ENCODE measurements at regions of chr5 and their contacts with region 1.

Region 1: DNA sequence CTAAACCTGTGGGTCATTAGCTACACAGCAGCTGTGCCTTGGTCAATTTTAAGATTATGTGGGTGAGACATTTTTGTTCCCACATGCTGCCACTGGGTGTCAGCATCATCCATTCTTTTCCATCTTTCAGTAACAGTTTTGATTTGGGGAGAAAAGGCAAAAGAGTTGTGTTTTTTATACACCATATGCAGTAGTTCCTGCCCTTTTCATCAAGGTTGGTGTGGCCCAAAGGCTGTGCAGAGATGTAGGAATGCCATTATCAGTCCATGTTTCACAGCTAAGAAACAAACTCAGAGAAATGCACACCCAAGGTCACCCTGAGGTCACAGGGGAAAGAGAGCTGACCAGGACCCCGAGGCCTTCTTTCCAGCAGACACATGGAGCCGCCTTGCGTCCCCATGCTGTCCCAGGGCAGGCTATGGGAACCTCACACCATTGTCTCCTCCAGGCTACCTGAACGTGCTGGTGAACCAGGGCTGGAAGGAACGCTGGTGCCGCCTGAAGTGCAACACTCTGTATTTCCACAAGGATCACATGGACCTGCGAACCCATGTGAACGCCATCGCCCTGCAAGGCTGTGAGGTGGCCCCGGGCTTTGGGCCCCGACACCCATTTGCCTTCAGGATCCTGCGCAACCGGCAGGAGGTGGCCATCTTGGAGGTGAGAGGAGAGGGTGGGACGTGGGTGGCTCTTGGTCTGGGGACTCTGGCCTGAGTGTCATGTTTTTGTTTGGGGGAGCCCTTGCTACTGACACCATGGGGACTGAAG is 27.8 kb upstream of the GRPEL2 start:
- DNase-seq: peak in 1 of 2 donors; percentile 79
- ATAC-seq: peak in 2 of 3 donors; percentile 55 to 67
- H3K4me3 ChIP-seq: no peak overlapping the region
- H3K4me3 Mint-ChIP-seq: no peak overlapping the region
- H3K27ac ChIP-seq: no peak overlapping the region
- H3K27ac Mint-ChIP-seq: no peak overlapping the region
- H3K4me1 ChIP-seq: no peaks in the 10 kb centered on the region
- H3K4me1 Mint-ChIP-seq: no peaks in the 10 kb centered on the region
- H3K27me3 ChIP-seq: no peaks in the 10 kb centered on the region
- H3K27me3 Mint-ChIP-seq: peaks cover 0 to 2% of the 10 kb centered on the region in 2 donors
- CTCF ChIP-seq: peak; percentile 65

Region 2: GRCh38 chr5:149371296-149371962 is 54.0 kb after region 1 on chr5:
- intact Hi-C with region 1: loop called (anchors 1 kb)
- DNase-seq: peak; percentile 53 to 86
- ATAC-seq: peak; percentile 85 to 96 (median 93)
- H3K4me3 ChIP-seq: no peak overlapping the region
- H3K4me3 Mint-ChIP-seq: no peak overlapping the region
- H3K27ac ChIP-seq: no peak overlapping the region
- H3K27ac Mint-ChIP-seq: no peak overlapping the region
- H3K4me1 ChIP-seq: peaks cover 2% of the 10 kb centered on the region
- H3K4me1 Mint-ChIP-seq: no peaks in the 10 kb centered on the region
- H3K27me3 ChIP-seq: no peaks in the 10 kb centered on the region
- H3K27me3 Mint-ChIP-seq: no peaks in the 10 kb centered on the region
- CTCF ChIP-seq: peak; percentile 78

Region 3: GRCh38 chr5:149392718-149393117 is 75.3 kb after region 1 on chr5:
- intact Hi-C with region 1: no loop called
- DNase-seq: no peak
- ATAC-seq: no peak
- H3K4me3 ChIP-seq: no peak overlapping the region
- H3K4me3 Mint-ChIP-seq: no peak overlapping the region
- H3K27ac ChIP-seq: no peak overlapping the region
- H3K27ac Mint-ChIP-seq: no peak overlapping the region
- H3K4me1 ChIP-seq: no peaks in the 10 kb centered on the region
- H3K4me1 Mint-ChIP-seq: no peaks in the 10 kb centered on the region
- H3K27me3 ChIP-seq: no peaks in the 10 kb centered on the region
- H3K27me3 Mint-ChIP-seq: peaks cover 6 to 7% of the 10 kb centered on the region in 2 donors
- CTCF ChIP-seq: no peak

Region 4: DNA sequence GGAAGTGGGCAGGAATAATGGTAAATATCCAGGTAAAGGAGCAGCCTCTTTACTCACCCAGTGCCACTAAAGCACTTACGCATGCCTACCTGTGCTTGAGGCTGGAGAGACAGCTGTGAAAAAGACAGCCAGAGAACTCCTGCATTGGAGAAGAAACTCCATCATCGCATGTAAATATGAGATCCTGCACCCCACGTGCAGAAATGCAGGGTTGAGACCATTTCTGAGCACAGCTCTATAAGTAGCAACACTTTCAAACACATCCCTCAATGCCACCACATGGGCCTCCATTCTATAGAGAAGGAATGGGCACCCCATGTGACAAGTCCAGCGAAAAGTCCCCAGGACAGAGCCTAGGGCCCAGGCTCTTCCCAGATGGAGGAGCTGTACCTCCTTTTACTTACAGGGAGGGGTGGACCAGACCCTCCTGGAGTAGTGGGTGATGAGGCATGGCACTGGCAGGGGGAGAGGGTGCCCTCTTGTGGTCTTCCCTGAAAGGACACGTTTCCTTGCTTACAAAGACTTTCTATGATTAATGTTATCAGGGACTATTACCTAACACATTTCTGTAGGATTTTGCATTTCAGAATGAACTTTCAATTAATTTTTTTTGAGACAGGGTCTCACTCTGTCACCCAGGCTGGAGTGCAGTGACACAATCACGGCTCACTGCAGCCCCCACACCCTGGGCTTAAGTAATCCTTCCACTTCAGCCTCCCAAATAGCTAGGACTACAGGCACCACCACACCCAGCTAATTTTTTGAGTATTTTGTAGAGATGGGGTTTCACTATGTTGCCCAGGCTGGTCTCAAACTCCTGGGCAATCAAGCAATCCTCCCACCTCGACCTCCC is 116.9 kb after region 1 on chr5:
- intact Hi-C with region 1: loop called (anchors 2 kb)
- DNase-seq: peak; percentile 31 to 70
- ATAC-seq: peak; percentile 53 to 63 (median 55)
- H3K4me3 ChIP-seq: no peak overlapping the region
- H3K4me3 Mint-ChIP-seq: no peak overlapping the region
- H3K27ac ChIP-seq: no peak overlapping the region
- H3K27ac Mint-ChIP-seq: peak overlapping the region in 1 of 2 donors; percentile 40
- H3K4me1 ChIP-seq: peaks cover 10% of the 10 kb centered on the region
- H3K4me1 Mint-ChIP-seq: peaks cover 16 to 17% of the 10 kb centered on the region in 2 donors
- H3K27me3 ChIP-seq: peaks cover 3% of the 10 kb centered on the region
- H3K27me3 Mint-ChIP-seq: peaks cover 9 to 10% of the 10 kb centered on the region in 2 donors
- CTCF ChIP-seq: peak; percentile 83